Caco-2 (cell line): ENCODE measurements at regions of chr17 and their contacts with region 1.

Region 1: DNA sequence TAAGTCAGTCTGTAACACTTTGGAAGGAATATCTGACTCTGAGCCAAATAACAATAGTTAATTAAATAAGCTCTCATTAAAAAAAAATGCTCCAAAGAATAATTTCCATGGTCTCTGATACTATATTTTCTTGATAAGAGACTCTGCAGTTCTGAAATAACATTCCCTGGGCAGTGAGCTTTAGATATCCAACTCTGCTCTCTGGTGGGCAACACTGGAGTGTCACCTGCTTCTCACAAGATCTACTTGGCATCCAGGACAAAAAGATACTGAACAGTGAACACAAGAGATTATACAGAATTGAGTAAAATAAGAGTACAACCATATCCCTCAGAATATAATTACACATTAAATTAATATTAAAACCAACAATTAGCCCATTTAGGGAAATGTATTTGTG is 13.7 kb downstream of the BLMH start:
- DNase-seq: peak; percentile 46 to 58
- H3K4me3 ChIP-seq: no peak overlapping the region
- H3K4me3 Mint-ChIP-seq: no peak overlapping the region
- H3K27ac Mint-ChIP-seq: no peak overlapping the region
- H3K4me1 ChIP-seq: no peaks in the 10 kb centered on the region
- H3K4me1 Mint-ChIP-seq: no peaks in the 10 kb centered on the region
- H3K27me3 ChIP-seq: no peaks in the 10 kb centered on the region
- H3K27me3 Mint-ChIP-seq: no peaks in the 10 kb centered on the region
- CTCF ChIP-seq: peak; percentile 62 to 72

Region 2: GRCh38 chr17:30104575-30105339 is 173.3 kb before region 1 on chr17:
- CTCF ChIA-PET with region 1: interaction called, 22 read pairs
- POLR2A ChIA-PET with region 1: interaction called, 3 read pairs
- intact Hi-C with region 1: loop called (anchors 1 kb)
- DNase-seq: peak; percentile 86 to 90
- H3K4me3 ChIP-seq: peak overlapping the region; percentile 42
- H3K4me3 Mint-ChIP-seq: peak overlapping the region; percentile 73
- H3K27ac Mint-ChIP-seq: peak overlapping the region; percentile 80
- H3K4me1 ChIP-seq: no peaks in the 10 kb centered on the region
- H3K4me1 Mint-ChIP-seq: peaks cover 7% of the 10 kb centered on the region
- H3K27me3 ChIP-seq: no peaks in the 10 kb centered on the region
- H3K27me3 Mint-ChIP-seq: no peaks in the 10 kb centered on the region
- CTCF ChIP-seq: peak; percentile 94 to 97

Region 3: DNA sequence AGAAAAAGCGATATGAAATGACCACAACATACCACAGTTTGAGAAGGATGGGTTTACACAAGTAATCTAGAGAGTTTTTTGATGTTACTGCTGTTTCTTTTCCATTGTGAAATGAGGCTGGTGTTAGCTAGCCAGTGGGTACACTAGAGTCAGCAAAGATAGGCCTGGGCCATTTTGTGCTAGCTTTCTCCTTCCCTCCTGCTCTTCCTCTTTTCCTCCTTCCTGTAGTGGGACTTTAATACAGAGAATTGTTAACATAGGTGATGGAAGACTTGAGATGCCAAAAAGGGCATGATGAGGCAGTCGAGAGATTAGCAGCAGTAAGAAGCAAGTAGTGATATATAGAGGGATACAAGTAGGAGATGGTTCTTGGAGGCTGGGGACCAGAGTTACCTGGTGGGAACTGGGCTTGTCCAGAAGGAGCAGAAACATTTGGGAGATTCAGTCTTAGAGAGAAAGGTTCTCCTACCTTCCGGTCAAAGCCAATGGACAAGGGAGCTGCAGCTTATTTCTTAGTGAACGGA is 153.7 kb before region 1 on chr17:
- CTCF ChIA-PET with region 1: interaction called, 10 read pairs
- POLR2A ChIA-PET with region 1: no interaction called
- intact Hi-C with region 1: loop called (anchors 1 kb)
- DNase-seq: no peak
- H3K4me3 ChIP-seq: no peak overlapping the region
- H3K4me3 Mint-ChIP-seq: no peak overlapping the region
- H3K27ac Mint-ChIP-seq: no peak overlapping the region
- H3K4me1 ChIP-seq: no peaks in the 10 kb centered on the region
- H3K4me1 Mint-ChIP-seq: no peaks in the 10 kb centered on the region
- H3K27me3 ChIP-seq: no peaks in the 10 kb centered on the region
- H3K27me3 Mint-ChIP-seq: no peaks in the 10 kb centered on the region
- CTCF ChIP-seq: no peak

Region 4: GRCh38 chr17:30200106-30200505 is 77.9 kb before region 1 on chr17:
- CTCF ChIA-PET with region 1: interaction called, 3 read pairs
- POLR2A ChIA-PET with region 1: no interaction called
- intact Hi-C with region 1: loop called (anchors 10 kb)
- DNase-seq: no peak
- H3K4me3 ChIP-seq: no peak overlapping the region
- H3K4me3 Mint-ChIP-seq: no peak overlapping the region
- H3K27ac Mint-ChIP-seq: no peak overlapping the region
- H3K4me1 ChIP-seq: no peaks in the 10 kb centered on the region
- H3K4me1 Mint-ChIP-seq: no peaks in the 10 kb centered on the region
- H3K27me3 ChIP-seq: no peaks in the 10 kb centered on the region
- H3K27me3 Mint-ChIP-seq: no peaks in the 10 kb centered on the region
- CTCF ChIP-seq: no peak